Testis (tissue), 5 donors: ENCODE measurements at regions of chr1 and their contacts with region 1.

Region 1: DNA sequence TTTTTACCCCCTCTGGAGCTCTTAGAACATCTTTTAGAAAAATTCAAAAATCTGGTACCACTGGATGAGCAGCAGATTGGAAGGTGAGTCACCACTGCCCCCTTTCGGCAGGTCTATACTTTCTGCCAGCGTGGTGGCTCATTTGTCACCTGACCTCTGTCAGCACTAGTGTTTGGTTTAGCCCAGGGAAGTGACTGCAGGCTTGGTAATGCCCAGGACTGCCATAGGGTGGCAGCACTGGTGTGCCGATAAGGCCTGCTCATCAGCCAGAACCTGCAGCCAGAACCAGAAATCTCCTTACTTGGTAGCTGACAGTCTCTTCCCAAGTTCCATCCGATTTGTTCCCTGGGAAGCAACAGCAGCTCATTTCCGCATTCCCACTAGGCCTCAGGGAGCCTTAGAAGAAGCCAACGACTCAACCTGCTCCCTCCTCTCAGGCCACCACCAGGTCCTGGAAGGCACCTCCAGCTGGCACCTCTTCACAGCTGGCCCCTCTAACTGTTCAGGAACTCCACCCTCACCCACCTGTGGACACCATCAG is 6.8 kb downstream of the SMIM12 start:
- DNase-seq: peak; percentile 93
- H3K4me3 ChIP-seq: no peak overlapping the region
- H3K27ac ChIP-seq: peak overlapping the region in 1 of 2 donors; percentile 18
- H3K4me1 ChIP-seq: peaks cover 8% of the 10 kb centered on the region
- H3K27me3 ChIP-seq: no peaks in the 10 kb centered on the region
- CTCF ChIP-seq: peak; percentile 91 to 98 (median 94)
- POLR2A ChIP-seq: no peak

Region 2: DNA sequence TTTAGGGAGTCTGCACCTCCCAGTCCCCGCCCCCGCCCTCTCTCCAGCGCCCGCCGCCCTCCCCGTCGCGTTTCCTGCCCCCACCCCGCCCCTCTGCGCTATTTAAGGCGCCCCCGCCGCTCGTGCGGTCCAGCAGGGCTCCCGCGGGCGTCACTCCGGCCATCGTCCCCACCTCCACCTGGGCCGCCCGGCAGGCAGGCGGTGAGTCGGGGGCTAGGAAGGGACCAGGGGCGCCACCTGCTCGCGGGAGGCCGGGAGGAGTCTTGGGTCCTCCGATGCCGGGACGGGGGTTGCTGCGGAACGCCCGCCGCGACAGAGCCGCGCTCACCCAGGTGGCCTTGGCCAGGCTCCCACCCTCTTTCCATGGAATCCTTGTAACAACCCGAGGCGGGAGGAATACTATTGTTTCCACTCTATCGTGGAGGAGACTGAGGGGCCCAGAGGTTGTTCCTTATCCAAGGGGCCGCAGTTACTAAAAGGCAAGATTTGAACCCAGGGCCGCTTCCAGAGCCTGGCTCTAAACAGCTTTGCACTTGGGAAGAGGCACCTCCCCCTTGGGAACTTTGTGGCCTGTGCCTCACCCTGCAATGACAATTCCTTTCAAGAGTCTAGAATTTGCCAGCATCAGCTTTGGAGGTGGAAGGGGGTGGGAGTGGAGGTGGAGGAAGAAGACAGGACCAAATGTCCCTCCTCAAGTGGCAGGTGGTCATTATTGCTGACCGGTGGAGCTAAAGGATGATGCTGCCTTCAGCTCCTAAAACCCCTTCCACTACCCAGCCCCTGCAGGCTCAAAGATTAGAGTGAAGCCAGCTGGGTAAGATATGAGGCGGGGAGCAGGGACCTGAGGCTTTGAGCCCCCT is 59.6 kb before region 1 on chr1 and contains the start of gene GJA4:
- intact Hi-C with region 1: loop called (anchors 5 kb)
- DNase-seq: no peak
- H3K4me3 ChIP-seq: peak within 1 kb of the TSS; percentile 47 to 61
- H3K27ac ChIP-seq: peak within 1 kb of the TSS in 1 of 2 donors; percentile 76
- H3K4me1 ChIP-seq: peaks cover 5% of the 10 kb centered on the region
- H3K27me3 ChIP-seq: no peaks in the 10 kb centered on the region
- CTCF ChIP-seq: no peak
- POLR2A ChIP-seq: no peak
- total RNA-seq, gene GJA4: 11.3 to 11.9 TPM